ENCODE measurements at regions of chr10 and their contacts with region 1.

Region 1: DNA sequence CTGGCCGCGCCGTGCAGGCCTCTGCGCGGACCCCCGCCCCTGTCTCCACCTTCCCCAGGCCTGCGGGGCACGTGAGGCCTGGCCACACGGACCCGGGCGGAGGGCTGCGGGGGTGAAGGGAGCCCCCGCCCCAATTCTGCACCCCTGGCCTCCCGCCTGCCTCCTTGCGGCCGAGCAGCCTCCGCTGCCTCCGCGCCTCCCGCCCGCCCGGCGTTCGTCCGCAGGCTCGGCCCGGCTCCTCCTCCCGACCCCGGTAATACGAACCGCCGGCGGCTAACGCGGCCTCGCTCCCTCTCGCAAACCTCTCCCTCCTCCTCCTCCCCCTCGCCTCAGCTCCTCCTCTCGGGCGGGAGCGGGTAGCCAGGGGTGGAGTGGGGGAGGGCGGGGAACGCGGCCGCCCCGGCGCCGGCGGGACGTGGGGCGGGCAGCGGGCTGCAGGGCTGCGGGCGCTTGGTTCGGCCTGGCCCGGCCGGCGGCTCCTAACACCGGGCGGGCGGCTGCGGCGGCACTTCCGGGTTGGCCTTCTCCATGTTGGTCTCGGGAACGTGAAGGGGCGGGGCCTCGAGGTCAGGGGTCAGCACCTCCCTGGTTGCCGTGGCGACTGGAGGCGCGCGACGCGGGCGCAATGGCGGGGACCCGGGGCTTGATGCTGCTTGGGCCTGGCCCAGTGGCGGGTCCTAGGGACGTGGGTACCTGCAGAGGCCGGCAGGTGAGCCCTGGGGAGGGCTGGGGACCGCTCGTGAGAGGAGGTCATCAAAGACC is at the start of gene RAB11FIP2:
- DNase-seq: peak; percentile 95 to 97 (median 97)
- H3K4me3 ChIP-seq: peak within 1 kb of the TSS; percentile 69 to 97 (median 87)
- H3K27ac ChIP-seq: peak within 1 kb of the TSS; percentile 61 to 98 (median 94)
- H3K27me3 ChIP-seq: no peaks in the 10 kb centered on the region
- CTCF ChIP-seq: peak in 7 of 56 donors; percentile 7 to 28 (median 21)
- total RNA-seq, gene RAB11FIP2: 32.7 to 65.3 (median 48.8) TPM

Region 2: DNA sequence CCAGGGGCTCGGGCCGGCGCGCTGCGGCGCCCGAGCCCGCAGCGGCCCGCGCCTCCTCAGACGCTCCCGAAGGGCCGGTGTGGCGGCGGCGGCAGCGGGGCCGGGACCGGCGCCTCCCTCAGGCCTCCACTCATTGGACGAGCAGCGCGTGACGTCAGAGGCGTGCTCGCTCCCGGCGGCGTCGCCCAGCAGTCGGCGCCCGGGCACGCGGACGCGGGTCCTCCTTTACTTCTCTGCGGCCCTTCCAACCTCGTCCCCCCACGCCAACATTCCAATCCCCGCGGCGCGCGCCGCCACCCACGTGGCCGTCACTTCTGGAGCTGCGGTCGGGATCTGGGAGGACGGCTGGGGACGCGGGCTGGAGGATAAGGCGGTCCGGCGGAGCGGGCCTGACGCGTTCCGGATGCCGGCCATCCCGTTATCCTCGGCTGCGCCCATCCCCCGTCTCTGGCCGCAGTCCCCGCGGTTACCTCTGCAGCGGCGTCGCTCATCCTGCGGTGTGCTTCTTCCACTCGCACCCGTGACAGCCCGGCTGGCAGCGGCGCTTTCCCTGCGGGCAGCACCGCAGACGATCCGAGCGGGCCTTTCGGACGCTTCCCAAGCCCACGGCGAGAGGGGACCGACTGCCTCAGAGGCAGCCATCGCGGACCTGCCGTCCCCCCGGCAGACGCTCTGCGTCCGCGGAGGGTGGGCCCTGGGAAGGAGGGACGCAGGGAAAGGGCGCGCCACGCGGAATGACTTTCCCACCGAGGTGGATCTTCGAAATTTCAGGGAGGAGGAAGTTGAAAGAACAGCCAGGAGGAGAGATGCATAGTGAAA is 671.0 kb before region 1 on chr10 and contains the start of gene PDZD8:
- intact Hi-C with region 1: loop called (anchors 5 kb)
- DNase-seq: peak; percentile 86 to 97 (median 92)
- H3K4me3 ChIP-seq: peak within 1 kb of the TSS; percentile 64 to 99 (median 91)
- H3K27ac ChIP-seq: peak within 1 kb of the TSS; percentile 55 to 97 (median 88)
- H3K27me3 ChIP-seq: peaks cover 0 to 5% (median 0%) of the 10 kb centered on the region in 45 donors
- CTCF ChIP-seq: peak in 32 of 56 donors; percentile 5 to 67 (median 20)
- total RNA-seq, gene PDZD8: 38.7 to 70.2 (median 47.8) TPM

Region 3: GRCh38 chr10:117537436-117537903 is 509.1 kb before region 1 on chr10:
- intact Hi-C with region 1: loop called in 1 of 2 experiments (anchors 5 kb)
- DNase-seq: no peak
- H3K4me3 ChIP-seq: peak overlapping the region in 49 of 59 donors; percentile 7 to 57 (median 31)
- H3K27ac ChIP-seq: peak overlapping the region in 17 of 59 donors; percentile 11 to 72 (median 47)
- H3K27me3 ChIP-seq: peaks cover 0 to 100% (median 95%) of the 10 kb centered on the region in 45 donors
- CTCF ChIP-seq: peak in 55 of 56 donors; percentile 31 to 88 (median 65)

Region 4: GRCh38 chr10:117609095-117609795 is 437.3 kb before region 1 on chr10:
- intact Hi-C with region 1: no loop called
- DNase-seq: peak in 2 of 10 donors; percentile 16 to 41
- H3K4me3 ChIP-seq: no peak overlapping the region
- H3K27ac ChIP-seq: peak overlapping the region in 24 of 59 donors; percentile 4 to 63 (median 28)
- H3K27me3 ChIP-seq: peaks cover 0 to 8% (median 0%) of the 10 kb centered on the region in 45 donors
- CTCF ChIP-seq: no peak

Region 5: GRCh38 chr10:118210276-118210675 is 163.7 kb after region 1 on chr10:
- intact Hi-C with region 1: loop called in 1 of 2 experiments (anchors 5 kb)
- DNase-seq: no peak
- H3K4me3 ChIP-seq: no peak overlapping the region
- H3K27ac ChIP-seq: no peak overlapping the region
- H3K27me3 ChIP-seq: no peaks in the 10 kb centered on the region
- CTCF ChIP-seq: no peak

Region 6: GRCh38 chr10:118341791-118342637 is 295.4 kb after region 1 on chr10 and contains the start of gene FAM204A:
- intact Hi-C with region 1: loop called in 1 of 2 experiments (anchors 5 kb)
- DNase-seq: peak; percentile 85 to 96 (median 92)
- H3K4me3 ChIP-seq: peak within 1 kb of the TSS; percentile 59 to 100 (median 94)
- H3K27ac ChIP-seq: peak within 1 kb of the TSS in 57 of 59 donors; percentile 8 to 93 (median 81)
- H3K27me3 ChIP-seq: no peaks in the 10 kb centered on the region
- CTCF ChIP-seq: peak in 18 of 56 donors; percentile 3 to 55 (median 16)
- total RNA-seq, gene FAM204A: 52.9 to 109 (median 80.0) TPM

Region 7: DNA sequence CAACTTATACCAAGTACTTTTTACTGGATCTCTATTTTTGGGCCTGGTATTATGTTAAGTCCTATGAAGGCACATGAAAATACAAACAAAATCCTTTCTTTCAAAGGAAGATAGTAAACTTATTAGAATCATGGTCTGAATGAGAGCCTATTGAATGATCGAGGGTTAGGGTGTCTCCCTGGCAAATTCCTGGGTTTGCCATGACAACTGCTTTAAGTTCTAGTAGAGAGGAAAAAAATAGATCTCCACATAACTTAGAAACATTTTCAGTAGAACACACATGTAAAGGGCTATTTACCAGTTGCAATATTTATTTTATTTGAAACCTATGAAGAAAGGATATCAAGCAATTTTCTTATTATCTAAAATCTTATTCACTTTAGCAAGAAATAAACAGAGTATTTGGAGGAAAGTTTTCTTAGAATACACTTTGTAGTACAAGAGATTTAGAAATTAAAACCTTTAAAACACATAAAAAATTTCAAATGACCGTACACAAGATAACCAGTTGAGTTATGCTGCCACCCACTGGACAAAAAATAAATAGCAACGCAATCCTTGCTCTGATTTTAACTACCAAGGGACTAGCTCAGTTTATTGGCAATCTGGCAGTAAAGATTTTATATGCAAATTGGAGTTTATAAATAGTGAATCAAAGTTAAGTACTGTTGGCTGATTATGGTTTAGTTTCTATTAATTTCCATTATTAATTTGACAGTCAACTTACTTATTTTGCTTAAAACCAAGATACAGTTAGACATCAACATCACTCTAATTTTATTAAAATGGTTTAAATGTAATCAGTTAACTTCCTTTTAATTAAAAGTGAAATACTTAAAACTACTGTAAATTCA is 674.3 kb after region 1 on chr10:
- intact Hi-C with region 1: no loop called
- DNase-seq: peak in 4 of 10 donors; percentile 31 to 74 (median 49)
- H3K4me3 ChIP-seq: no peak overlapping the region
- H3K27ac ChIP-seq: peak overlapping the region in 1 of 59 donors; percentile 4
- H3K27me3 ChIP-seq: no peaks in the 10 kb centered on the region
- CTCF ChIP-seq: peak; percentile 76 to 99 (median 92)

Measured in dorsolateral prefrontal cortex (tissue), 120 donors.